ENCODE measurements at regions of chr10 and their contacts with region 1.

Region 1: DNA sequence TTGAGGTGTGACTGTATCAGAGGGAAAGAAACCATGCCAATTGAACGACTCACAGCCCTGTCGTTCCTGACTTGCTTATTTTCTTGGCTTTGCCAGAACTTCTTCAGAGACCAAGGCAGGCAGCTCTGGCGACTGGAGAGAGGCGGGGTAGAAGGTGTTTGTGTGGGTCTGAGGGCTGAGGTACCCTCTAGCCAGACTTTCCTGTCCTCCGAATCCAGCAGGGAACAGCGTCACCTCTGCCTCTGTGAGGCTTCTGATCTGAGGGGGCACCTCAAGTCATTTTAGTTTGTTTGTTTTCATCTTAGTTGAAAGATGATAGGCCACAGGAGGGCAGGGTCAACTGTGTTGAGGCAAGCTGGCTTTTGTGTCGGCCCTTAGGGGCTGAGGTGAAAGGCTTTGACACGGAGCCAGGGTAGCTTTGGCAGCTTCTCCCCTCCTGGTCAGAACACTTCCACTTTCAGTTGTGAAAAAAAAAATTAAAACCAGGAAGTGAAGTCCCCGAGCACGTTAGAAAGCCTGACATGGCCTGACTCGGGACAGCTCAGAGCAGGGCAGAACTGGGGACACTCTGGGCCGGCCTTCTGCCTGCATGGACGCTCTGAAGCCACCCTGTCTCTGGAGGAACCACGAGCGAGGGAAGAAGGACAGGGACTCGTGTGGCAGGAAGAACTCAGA is 1.9 kb downstream of the ACSL5 start:
- DNase-seq: peak; percentile 84
- CTCF ChIP-seq: peak; percentile 6

Region 2: DNA sequence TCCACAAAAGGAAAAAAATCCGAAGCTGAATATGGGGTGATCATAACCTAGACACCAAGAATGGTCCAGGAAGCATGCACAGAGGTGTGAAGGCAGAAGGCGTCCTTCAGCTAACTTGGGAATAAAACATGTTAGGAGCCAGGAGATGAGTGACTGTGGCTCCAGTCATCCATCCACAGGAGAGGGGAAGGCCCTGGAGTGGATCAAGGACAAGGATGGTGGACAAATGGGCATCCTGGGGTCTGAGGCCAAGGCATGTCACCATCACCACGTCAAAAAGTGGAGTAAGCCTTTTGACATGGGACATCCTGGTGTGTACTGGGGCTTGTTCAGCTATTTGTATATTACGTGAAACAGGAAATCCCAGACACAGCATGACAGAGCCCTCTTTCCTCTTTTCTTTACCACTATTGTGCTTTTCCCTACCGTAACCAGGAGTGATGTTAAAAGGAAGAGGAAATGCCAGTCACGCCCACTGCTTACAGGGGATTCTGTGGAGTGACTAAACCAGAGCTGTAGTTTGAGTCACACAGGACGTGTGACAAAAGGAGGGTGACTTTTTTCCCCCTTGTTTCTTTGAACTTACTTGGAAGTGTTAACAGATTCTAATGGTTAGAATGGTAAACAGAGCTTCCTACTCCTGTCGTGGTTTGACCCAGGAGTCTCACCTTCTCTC is 13.4 kb after region 1 on chr10:
- CTCF ChIA-PET with region 1: interaction called, 36 read pairs
- POLR2A ChIA-PET with region 1: interaction called, 6 read pairs
- DNase-seq: peak; percentile 20
- CTCF ChIP-seq: no peak